Right ventricle myocardium superior (tissue), 1 donor: ENCODE measurements at regions of chr14 and their contacts with region 1.

Region 1: GRCh38 chr14:95424529-95424928 is 91.9 kb downstream of the SYNE3 start:
- DNase-seq: no peak
- ATAC-seq: peak; percentile 67

Region 2: DNA sequence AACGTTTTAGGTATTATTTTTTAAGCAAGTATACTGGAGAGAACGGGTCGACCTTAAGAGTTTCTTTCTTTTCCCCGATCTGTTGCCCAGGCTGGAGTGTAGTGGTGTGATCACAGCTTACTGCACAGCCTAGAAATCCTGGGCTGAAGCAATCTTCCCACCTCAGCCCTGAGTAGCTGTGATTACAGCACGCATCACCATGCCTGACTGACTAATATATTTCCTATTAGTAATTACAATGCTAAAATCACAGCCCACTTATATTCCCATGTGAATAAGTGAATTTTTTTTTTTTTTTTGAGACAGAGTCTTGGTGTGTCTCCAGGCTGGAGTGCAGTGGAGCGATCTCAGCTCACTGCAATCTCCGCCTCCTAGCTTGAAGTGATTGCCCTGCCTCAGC is 317.6 kb before region 1 on chr14:
- intact Hi-C with region 1: loop called (anchors 10 kb)
- DNase-seq: no peak
- ATAC-seq: no peak